A673 (cell line): ENCODE measurements at regions of chr3 and their contacts with region 1.

Region 1: DNA sequence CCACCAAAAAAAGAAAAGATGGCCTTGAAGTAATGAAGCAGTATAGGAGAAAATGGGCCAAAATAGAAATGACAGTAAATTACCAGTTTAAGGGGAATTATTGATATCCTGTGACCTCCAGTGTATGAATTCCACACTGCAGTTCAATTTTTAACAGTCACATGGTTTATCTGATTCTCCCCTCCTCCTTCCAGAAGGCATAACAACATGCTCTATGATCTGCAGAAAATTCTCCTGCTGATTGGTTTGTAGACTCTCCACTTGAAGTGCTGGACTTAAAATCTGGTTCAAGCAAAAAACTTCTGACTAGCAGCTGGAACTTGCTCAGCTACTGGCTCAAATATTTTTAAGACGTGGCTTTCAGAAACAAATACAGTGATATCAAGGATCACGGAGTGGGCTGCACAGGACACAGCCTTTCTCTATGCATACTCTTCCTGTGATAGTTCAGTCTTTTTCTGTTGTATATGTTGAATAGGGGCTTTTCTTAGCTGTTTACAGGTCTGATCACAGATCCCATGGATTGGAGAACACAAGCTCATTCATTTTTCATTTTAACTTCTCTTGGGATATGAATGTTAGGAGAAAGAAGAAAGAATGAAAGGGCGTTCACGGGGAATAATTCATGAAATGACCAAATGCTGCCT is 211.5 kb downstream of the LSAMP start:
- DNase-seq: no peak
- H3K4me3 ChIP-seq: no peak overlapping the region
- H3K27ac ChIP-seq: no peak overlapping the region
- H3K4me1 ChIP-seq: no peaks in the 10 kb centered on the region
- H3K27me3 ChIP-seq: no peaks in the 10 kb centered on the region
- CTCF ChIP-seq: no peak

Region 2: GRCh38 chr3:116059421-116060096 is 174.3 kb before region 1 on chr3:
- CTCF ChIA-PET with region 1: interaction called, 11 read pairs
- POLR2A ChIA-PET with region 1: no interaction called
- intact Hi-C with region 1: no loop called
- DNase-seq: peak; percentile 96
- H3K4me3 ChIP-seq: no peak overlapping the region
- H3K27ac ChIP-seq: peak overlapping the region; percentile 76
- H3K4me1 ChIP-seq: peaks cover 31% of the 10 kb centered on the region
- H3K27me3 ChIP-seq: no peaks in the 10 kb centered on the region
- CTCF ChIP-seq: no peak

Region 3: DNA sequence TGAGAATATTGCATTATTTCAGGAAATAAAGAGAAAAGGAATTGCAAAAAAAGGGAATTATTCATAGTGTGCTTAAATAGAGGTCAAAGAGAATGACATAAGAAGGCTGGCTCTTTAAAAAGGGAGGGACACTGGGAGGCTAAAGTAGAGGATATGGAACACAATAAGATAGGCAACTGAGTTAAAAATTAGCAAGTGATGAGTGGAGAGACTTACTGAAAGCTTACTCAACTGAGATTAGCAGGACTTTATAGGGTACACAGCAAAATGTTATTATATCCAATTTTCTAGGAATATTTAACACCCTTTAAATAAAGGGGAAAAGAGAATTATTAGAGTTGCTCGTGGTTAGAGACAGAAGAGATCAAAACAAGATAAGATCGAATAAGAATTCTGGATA is 163.8 kb before region 1 on chr3:
- CTCF ChIA-PET with region 1: no interaction called
- POLR2A ChIA-PET with region 1: no interaction called
- intact Hi-C with region 1: no loop called
- DNase-seq: no peak
- H3K4me3 ChIP-seq: no peak overlapping the region
- H3K27ac ChIP-seq: no peak overlapping the region
- H3K4me1 ChIP-seq: peaks cover 53% of the 10 kb centered on the region
- H3K27me3 ChIP-seq: no peaks in the 10 kb centered on the region
- CTCF ChIP-seq: no peak

Region 4: DNA sequence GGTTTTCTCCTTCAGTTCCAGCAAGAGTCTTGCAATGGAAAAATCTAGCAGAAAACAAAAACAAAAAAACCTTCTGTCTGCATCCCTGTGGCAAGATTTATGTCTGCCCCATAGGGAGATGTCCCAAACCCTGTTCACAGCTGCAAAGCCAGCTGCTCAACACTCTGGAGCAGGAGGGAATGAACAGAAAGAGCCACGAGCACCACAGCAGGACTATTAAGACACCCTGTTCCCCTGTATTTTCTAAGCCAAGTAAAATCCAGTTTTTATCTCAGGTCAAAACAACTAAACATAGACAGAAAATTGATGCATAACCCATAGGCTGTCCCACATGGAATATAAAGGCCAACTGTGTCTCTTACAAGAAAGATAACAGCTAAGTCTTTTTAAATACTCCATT is 146.4 kb before region 1 on chr3:
- CTCF ChIA-PET with region 1: no interaction called
- POLR2A ChIA-PET with region 1: no interaction called
- intact Hi-C with region 1: no loop called
- DNase-seq: peak; percentile 8
- H3K4me3 ChIP-seq: no peak overlapping the region
- H3K27ac ChIP-seq: no peak overlapping the region
- H3K4me1 ChIP-seq: peaks cover 26% of the 10 kb centered on the region
- H3K27me3 ChIP-seq: no peaks in the 10 kb centered on the region
- CTCF ChIP-seq: no peak

Region 5: DNA sequence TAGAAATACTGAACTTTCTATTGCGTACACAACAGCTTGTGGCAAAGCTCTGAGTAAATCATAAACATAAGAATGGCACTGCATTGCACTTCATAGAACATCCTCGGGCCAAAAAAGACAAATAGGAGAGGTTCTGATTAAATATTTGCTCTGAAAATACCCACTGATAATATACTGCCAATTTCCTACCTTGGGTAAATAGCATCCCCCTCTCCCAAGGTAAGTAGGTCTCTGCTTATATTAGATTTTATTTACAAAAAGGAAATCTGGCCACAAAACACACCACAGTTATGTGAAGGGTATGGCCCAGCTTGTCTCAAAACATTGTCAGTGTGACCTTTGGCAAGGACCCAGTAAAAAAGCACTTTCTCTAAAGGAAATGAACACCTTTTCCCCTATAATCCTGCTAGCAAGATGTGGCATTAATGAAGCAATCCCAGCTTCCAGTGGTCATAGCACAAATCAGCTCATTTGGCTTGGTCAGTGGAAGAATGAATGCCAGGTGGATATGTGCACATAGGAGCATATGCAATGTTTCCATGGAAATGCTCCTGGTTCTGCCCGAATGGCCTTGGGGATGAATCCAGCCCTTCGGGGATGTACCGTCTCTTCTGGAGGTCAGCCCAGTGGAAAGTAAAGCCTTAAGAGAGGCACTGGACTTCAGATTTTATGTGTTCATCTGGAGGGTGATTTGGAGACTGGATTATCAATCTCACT is 104.4 kb before region 1 on chr3:
- CTCF ChIA-PET with region 1: no interaction called
- POLR2A ChIA-PET with region 1: no interaction called
- intact Hi-C with region 1: no loop called
- DNase-seq: no peak
- H3K4me3 ChIP-seq: no peak overlapping the region
- H3K27ac ChIP-seq: no peak overlapping the region
- H3K4me1 ChIP-seq: no peaks in the 10 kb centered on the region
- H3K27me3 ChIP-seq: no peaks in the 10 kb centered on the region
- CTCF ChIP-seq: no peak

Region 6: GRCh38 chr3:116179091-116179490 is 54.7 kb before region 1 on chr3:
- CTCF ChIA-PET with region 1: no interaction called
- POLR2A ChIA-PET with region 1: no interaction called
- intact Hi-C with region 1: no loop called
- DNase-seq: peak; percentile 76
- H3K4me3 ChIP-seq: no peak overlapping the region
- H3K27ac ChIP-seq: peak overlapping the region; percentile 67
- H3K4me1 ChIP-seq: peaks cover 54% of the 10 kb centered on the region
- H3K27me3 ChIP-seq: no peaks in the 10 kb centered on the region
- CTCF ChIP-seq: no peak